ENCODE measurements at regions of chr15 and their contacts with region 1.

Region 1: GRCh38 chr15:63497642-63498467 is 6.5 kb upstream of the USP3 start:
- DNase-seq: peak; percentile 74
- H3K4me3 ChIP-seq: no peak overlapping the region
- H3K27ac ChIP-seq: peak overlapping the region; percentile 31 to 68 (median 56)
- H3K4me1 ChIP-seq: peaks cover 20 to 57% (median 27%) of the 10 kb centered on the region in 4 donors
- H3K27me3 ChIP-seq: no peaks in the 10 kb centered on the region
- CTCF ChIP-seq: no peak
- EP300 ChIP-seq: no peak
- POLR2A ChIP-seq: no peak

Region 2: GRCh38 chr15:63514531-63514943 is 16.7 kb after region 1 on chr15:
- in situ Hi-C with region 1: no loop called
- intact Hi-C with region 1: loop called (anchors 1 kb)
- DNase-seq: no peak
- H3K4me3 ChIP-seq: no peak overlapping the region
- H3K27ac ChIP-seq: peak overlapping the region in 3 of 4 donors; percentile 48 to 59 (median 54)
- H3K4me1 ChIP-seq: peaks cover 43 to 98% (median 71%) of the 10 kb centered on the region in 4 donors
- H3K27me3 ChIP-seq: no peaks in the 10 kb centered on the region
- CTCF ChIP-seq: no peak
- EP300 ChIP-seq: no peak
- POLR2A ChIP-seq: no peak

Region 3: DNA sequence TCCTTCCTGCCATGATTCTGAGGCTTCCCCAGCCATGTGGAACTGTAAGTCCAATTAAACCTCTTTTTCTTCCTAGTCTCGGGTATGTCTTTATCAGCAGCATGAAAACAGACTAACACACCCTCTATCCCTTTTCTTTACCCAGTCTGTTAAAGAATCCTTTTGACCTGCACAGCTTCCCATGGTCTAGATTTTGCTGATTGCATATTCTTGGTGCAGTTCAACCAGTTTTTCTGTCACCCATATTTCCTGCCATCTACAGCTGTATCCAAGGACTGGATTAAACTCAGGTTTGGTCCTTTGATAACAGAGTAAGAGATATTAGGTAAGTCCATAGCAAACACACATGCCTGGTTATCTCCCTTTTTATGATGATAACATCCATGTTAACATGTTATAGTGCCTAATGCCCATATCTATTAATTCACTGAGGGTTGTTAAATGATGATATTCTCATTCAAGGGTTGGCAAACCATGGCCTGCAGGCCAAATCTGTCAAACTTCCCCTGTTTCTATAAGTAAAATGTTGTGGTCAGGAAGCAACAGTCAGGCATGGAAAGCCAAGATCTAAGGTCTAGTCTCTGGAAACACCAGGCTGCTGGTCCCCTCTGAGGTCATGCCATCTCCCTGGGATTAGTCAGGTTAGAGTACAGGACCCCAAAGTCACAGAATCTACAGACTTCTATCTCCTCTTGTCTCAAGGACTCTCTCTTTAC is 350.8 kb after region 1 on chr15:
- in situ Hi-C with region 1: no loop called
- intact Hi-C with region 1: no loop called
- DNase-seq: no peak
- H3K4me3 ChIP-seq: no peak overlapping the region
- H3K27ac ChIP-seq: no peak overlapping the region
- H3K4me1 ChIP-seq: no peaks in the 10 kb centered on the region
- H3K27me3 ChIP-seq: no peaks in the 10 kb centered on the region
- CTCF ChIP-seq: no peak
- EP300 ChIP-seq: no peak
- POLR2A ChIP-seq: no peak

Measured in transverse colon (tissue), 4 donors.